HCT116 (cell line): ENCODE measurements at regions of chr6 and their contacts with region 1.

Region 1: GRCh38 chr6:17156112-17156921 is 54.5 kb downstream of the STMND1 start:
- DNase-seq: peak; percentile 80
- ATAC-seq: peak; percentile 81
- H3K4me3 ChIP-seq: no peak overlapping the region
- H3K27ac ChIP-seq: no peak overlapping the region
- H3K4me1 ChIP-seq: no peaks in the 10 kb centered on the region
- H3K27me3 ChIP-seq: no peaks in the 10 kb centered on the region
- CTCF ChIP-seq: peak; percentile 70 to 92 (median 86)
- POLR2A ChIP-seq: no peak
- RAD21 ChIP-seq: peak; percentile 94

Region 2: DNA sequence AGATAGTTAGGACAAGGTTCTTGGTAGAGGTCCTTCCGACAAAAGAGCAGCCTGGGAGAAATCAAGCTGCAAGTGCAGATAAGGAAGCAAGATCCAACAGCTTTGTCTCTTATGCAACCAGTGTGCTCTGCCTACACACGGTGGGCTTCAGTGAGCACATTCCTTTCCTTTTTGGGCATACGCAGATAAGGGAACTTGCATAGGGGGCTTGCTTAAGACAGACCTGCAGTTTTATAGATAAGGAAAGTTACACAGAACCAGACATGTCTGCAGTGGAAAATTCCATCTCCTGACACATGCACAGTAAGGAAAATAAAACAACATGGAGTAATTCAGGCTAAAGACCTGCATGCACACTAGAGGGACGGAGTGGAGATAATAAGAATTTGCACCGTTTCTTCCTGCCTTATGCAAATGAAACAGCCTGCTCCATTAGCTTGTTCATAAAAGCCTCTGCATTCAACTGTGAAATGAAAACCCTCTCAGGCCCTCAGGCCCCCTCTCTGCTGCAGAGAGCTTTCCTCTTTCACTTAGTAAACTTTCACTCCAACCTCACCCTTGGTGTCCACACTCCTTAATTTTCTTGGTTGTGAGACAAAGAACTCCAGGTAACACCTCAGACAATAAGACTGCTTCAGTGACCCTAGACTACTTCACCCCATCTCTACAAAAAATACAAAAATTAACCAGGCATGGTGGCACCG is 1124.9 kb before region 1 on chr6:
- CTCF ChIA-PET with region 1: no interaction called
- POLR2A ChIA-PET with region 1: no interaction called
- RAD21 ChIA-PET with region 1: no interaction called
- intact Hi-C with region 1: no loop called
- DNase-seq: no peak
- ATAC-seq: no peak
- H3K4me3 ChIP-seq: no peak overlapping the region
- H3K27ac ChIP-seq: no peak overlapping the region
- H3K4me1 ChIP-seq: no peaks in the 10 kb centered on the region
- H3K27me3 ChIP-seq: no peaks in the 10 kb centered on the region
- CTCF ChIP-seq: no peak
- POLR2A ChIP-seq: no peak
- RAD21 ChIP-seq: no peak

Region 3: GRCh38 chr6:16901782-16902181 is 254.5 kb before region 1 on chr6:
- CTCF ChIA-PET with region 1: no interaction called
- POLR2A ChIA-PET with region 1: no interaction called
- RAD21 ChIA-PET with region 1: no interaction called
- intact Hi-C with region 1: no loop called
- DNase-seq: no peak
- ATAC-seq: no peak
- H3K4me3 ChIP-seq: no peak overlapping the region
- H3K27ac ChIP-seq: no peak overlapping the region
- H3K4me1 ChIP-seq: no peaks in the 10 kb centered on the region
- H3K27me3 ChIP-seq: no peaks in the 10 kb centered on the region
- CTCF ChIP-seq: no peak
- POLR2A ChIP-seq: no peak
- RAD21 ChIP-seq: no peak

Region 4: DNA sequence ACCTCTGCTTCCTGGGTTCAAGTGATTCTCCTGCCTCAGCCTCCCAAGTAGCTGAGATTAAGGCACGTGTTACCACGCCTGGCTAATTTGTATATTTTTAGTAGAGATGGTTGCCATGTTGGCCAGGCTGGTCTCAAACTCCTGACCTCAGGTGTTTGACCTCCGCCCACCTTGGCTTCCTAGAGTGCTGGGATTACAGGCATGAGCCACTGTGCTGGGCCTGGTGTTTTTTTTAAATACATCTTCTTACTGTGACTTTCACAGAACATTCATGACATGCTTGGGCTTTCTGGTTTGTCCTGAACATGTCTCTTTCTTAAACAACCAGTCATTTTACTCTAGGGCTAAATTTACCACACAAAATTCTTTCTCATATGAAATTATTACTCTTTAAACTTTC is 409.1 kb after region 1 on chr6:
- CTCF ChIA-PET with region 1: no interaction called
- POLR2A ChIA-PET with region 1: no interaction called
- RAD21 ChIA-PET with region 1: no interaction called
- intact Hi-C with region 1: no loop called
- DNase-seq: no peak
- ATAC-seq: no peak
- H3K4me3 ChIP-seq: no peak overlapping the region
- H3K27ac ChIP-seq: no peak overlapping the region
- H3K4me1 ChIP-seq: no peaks in the 10 kb centered on the region
- H3K27me3 ChIP-seq: no peaks in the 10 kb centered on the region
- CTCF ChIP-seq: no peak
- POLR2A ChIP-seq: no peak
- RAD21 ChIP-seq: no peak

Region 5: DNA sequence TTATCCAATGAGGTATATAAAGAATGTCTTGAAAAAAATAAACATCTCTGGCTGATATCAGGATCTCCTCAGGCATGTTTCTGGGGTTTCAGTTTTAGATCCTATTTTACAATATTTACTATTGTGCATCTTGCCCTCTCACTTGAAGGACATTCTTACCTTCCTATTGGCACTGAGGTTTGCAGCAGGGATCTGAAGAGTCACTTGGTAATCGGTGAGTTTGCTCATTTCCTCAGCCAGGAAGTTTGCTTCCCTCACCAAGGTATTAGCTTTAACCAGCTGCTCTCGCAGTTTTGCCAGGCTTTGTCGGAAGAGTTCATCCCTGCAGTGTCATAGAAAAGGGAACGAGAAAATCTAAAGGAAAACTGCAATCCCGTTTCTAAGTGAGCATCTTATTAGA is 652.3 kb after region 1 on chr6:
- CTCF ChIA-PET with region 1: no interaction called
- POLR2A ChIA-PET with region 1: no interaction called
- RAD21 ChIA-PET with region 1: no interaction called
- intact Hi-C with region 1: loop called (anchors 2 kb)
- DNase-seq: no peak
- ATAC-seq: no peak
- H3K4me3 ChIP-seq: no peak overlapping the region
- H3K27ac ChIP-seq: no peak overlapping the region
- H3K4me1 ChIP-seq: no peaks in the 10 kb centered on the region
- H3K27me3 ChIP-seq: no peaks in the 10 kb centered on the region
- CTCF ChIP-seq: no peak
- POLR2A ChIP-seq: no peak
- RAD21 ChIP-seq: no peak

Region 6: DNA sequence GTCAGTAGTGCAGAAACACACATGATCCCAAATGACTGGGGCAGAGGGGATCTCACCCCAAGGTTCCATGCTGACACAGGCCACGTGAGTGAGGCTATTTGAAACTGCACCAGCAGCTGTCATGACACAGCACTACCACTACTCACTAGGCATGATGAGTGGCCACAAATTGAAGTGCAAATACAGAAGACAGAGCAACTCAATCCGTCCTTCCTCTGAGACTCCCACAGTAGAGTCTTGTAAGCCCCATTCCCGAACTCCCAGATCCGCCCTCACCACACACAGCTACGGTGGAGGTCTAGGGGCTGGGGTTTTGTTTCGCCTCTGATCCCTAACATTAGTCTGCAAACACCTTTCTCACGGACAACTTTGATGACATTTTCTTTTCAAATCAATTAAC is 663.7 kb after region 1 on chr6:
- CTCF ChIA-PET with region 1: no interaction called
- POLR2A ChIA-PET with region 1: no interaction called
- RAD21 ChIA-PET with region 1: no interaction called
- intact Hi-C with region 1: loop called (anchors 5 kb)
- DNase-seq: no peak
- ATAC-seq: peak; percentile 44; the same call in 1 of the 2 replicates
- H3K4me3 ChIP-seq: no peak overlapping the region
- H3K27ac ChIP-seq: no peak overlapping the region
- H3K4me1 ChIP-seq: peaks cover 4 to 5% of the 10 kb centered on the region in 2 experiments; a peak in 2 of 4 replicates
- H3K27me3 ChIP-seq: no peaks in the 10 kb centered on the region
- CTCF ChIP-seq: 0 out of 6 replicates have a peak, but pooled peaks of 2 of the 3 experiments have one; percentile 5 to 9
- POLR2A ChIP-seq: no peak
- RAD21 ChIP-seq: no peak